ENCODE measurements at regions of chr2 and their contacts with region 1.

Region 1: GRCh38 chr2:173027181-173028128 is 48.2 kb upstream of the MAP3K20 start:
- DNase-seq: peak; percentile 84
- H3K4me3 ChIP-seq: no peak overlapping the region
- H3K27ac ChIP-seq: no peak overlapping the region
- H3K27me3 ChIP-seq: no peaks in the 10 kb centered on the region
- CTCF ChIP-seq: peak; percentile 89

Region 2: DNA sequence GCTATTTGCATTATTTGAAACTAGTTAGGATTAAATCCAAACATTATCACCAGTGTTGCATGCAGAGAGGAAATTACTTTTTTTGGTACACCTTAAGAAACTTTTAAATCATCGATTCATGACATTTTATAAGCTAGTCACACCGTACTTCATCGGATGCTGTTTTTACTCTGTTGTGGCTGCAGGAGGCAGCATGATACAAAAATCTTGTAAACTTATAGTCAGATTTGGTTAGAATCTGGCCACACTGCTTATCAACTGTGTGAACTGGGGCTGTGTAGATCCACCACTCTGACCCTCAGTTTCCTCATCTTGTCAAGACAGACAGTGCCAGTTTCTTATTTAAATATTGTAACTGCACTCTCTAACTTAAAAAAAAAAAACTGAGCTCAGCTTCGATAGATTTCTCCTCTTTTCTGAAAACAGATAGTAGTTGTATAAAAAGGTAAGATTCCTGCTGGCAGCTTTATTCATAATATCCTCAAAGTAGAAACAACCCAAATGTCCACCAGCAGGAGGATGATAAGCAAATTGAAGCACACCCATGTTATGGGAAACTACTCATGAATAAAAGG is 214.1 kb before region 1 on chr2:
- CTCF ChIA-PET with region 1: interaction called, 97 read pairs
- POLR2A ChIA-PET with region 1: no interaction called
- DNase-seq: no peak
- H3K4me3 ChIP-seq: no peak overlapping the region
- H3K27ac ChIP-seq: no peak overlapping the region
- H3K27me3 ChIP-seq: no peaks in the 10 kb centered on the region
- CTCF ChIP-seq: peak; percentile 63

Region 3: GRCh38 chr2:173048897-173049661 is 21.6 kb after region 1 on chr2:
- CTCF ChIA-PET with region 1: interaction called, 28 read pairs
- POLR2A ChIA-PET with region 1: interaction called, 8 read pairs
- DNase-seq: peak; percentile 90
- H3K4me3 ChIP-seq: no peak overlapping the region
- H3K27ac ChIP-seq: peak overlapping the region; percentile 49
- H3K27me3 ChIP-seq: no peaks in the 10 kb centered on the region
- CTCF ChIP-seq: no peak

Region 4: GRCh38 chr2:173119069-173119807 is 91.8 kb after region 1 on chr2:
- CTCF ChIA-PET with region 1: interaction called, 11 read pairs
- POLR2A ChIA-PET with region 1: no interaction called
- DNase-seq: no peak
- H3K4me3 ChIP-seq: no peak overlapping the region
- H3K27ac ChIP-seq: no peak overlapping the region
- H3K27me3 ChIP-seq: no peaks in the 10 kb centered on the region
- CTCF ChIP-seq: no peak

Region 5: DNA sequence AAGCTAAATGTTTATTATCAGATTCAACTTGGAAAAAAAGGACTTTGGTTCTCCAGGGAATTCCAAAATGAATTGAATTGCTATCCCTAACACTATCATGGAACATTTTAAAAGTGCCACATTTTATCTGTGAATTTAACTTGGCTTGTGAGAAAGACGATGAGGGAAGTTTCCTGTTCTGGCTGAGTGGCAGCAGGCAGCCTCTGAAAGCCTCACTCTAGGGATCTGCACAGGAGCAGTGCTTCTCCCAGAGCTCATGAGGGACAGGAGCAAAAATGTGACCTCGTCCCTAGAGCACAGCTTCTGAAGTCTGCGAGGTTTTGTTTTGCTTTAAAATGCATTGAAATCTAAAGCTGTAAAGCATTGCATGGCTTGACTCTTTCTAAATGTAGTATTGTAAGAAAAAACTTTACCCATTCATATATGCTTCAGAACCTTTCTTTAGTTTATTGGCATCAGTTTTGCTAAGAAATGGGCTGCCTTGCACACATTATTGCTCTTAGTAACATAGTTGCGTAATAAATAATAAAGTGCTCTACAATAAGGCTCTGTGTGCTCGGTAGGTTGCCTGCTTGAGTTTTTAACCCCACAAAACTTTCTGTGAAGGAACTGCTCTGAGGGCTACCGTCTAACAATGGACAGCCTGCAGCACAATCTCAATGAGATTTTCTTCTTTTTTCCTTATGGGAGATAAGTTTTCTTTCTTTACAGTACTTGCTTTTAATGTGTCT is 191.0 kb after region 1 on chr2:
- CTCF ChIA-PET with region 1: interaction called, 324 read pairs
- POLR2A ChIA-PET with region 1: interaction called, 3 read pairs
- DNase-seq: no peak
- H3K4me3 ChIP-seq: no peak overlapping the region
- H3K27ac ChIP-seq: no peak overlapping the region
- H3K27me3 ChIP-seq: no peaks in the 10 kb centered on the region
- CTCF ChIP-seq: no peak

Region 6: DNA sequence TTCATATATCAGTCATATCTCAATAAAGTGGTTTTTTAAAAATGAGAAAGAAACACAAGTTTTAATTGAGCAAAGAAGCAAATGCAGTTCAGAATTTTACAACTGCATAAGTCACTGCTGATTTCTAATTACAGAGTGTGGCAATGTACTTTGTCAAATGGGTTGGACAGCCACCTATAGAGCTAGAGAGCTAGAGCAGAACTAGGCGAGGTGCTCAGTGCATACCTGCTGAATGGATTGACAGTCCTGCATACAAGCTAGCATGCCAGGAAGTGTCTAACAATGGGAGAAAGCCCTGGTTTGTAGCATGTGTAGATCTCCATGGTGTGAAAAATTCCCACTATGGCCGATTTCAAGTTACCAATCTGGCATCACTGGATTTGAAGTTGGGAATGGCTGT is 220.9 kb after region 1 on chr2:
- CTCF ChIA-PET with region 1: no interaction called
- POLR2A ChIA-PET with region 1: no interaction called
- DNase-seq: no peak
- H3K4me3 ChIP-seq: no peak overlapping the region
- H3K27ac ChIP-seq: no peak overlapping the region
- H3K27me3 ChIP-seq: no peaks in the 10 kb centered on the region
- CTCF ChIP-seq: no peak